ENCODE measurements at regions of chr16 and their contacts with region 1.

Region 1: DNA sequence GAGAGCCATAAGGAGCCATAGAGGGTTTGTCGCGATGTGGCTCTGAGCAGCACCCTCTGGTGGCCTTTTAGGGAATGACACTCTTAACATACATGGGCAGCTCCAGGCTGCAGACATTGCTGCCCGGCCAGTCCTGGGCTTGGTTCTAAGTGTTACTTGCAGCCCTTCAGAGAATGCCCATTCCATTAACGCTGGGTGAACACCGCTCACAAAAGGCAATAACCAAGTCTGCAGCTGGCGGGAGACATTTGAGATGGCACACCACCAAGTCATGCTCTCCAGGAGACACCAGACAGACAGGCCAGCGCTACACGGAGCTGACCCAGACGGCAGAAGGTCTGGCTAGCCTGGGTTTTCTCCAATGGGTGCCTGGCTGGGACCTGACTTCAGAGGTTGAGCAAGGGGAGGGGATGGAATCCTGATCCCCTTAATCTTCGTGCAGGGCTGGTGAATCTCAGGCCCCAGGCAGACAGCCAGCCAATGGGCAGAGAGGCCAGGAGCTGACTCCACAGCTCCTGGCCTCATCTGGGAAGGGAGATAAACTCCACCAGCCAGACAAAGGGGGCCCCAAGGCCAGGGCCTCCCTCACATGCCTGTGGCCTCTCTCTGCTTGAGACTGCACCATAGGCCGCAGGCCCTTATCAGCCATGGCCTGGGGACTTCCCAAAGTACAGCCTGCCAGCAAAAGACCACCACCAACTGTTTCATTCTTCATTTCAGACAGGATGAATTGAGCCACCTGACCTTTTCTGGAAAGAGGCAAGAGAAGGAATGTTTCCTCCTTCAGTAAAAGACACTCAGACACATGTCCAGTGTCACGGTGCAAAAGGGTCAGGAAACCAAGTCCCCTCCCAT is 58.8 kb downstream of the ZDHHC7 start:
- DNase-seq: peak; percentile 80
- ATAC-seq: peak; percentile 89 to 97
- H3K4me3 ChIP-seq: no peak overlapping the region
- H3K27ac ChIP-seq: no peak overlapping the region
- H3K4me1 ChIP-seq: no peaks in the 10 kb centered on the region
- CTCF ChIP-seq: peak; percentile 78
- EP300 ChIP-seq: no peak
- POLR2A ChIP-seq: no peak
- RAD21 ChIP-seq: peak; percentile 68 to 81

Region 2: DNA sequence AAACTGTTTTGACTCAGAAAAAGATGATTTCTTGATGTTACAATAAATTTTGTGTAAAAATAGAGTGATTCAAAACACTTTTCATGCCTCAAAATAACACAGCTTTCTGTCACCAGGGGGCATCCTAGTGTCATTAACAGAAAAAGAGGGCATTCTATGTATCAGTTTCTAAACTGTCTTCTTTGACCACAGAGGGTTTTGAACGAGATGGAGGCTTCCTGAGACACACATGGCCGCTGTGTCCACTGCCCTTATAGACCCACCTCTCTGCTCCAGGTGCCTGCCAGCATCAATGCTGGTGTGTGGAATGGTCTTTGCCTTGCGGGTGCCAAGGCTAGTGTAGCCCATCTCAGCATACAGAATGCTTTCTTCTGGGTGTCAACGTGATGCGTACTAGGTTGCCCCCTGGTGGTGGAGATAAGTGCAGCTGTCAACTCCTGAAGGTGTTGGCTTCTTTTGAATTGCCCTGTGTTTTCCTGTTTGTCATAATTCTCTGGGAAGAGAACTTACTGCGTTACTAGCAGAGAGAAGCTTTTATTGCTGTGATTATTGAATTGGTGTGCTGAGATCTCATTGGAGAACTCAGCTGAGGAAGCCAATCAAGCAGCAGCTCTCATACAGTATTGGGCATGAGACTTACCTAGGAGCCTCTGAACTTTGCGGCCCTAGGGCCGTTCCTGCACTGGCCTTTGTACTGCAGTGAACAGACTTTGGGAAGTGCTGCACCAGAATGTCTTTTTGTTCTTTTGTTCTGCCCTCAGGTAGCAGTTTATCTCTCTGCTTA is 214.1 kb before region 1 on chr16:
- CTCF ChIA-PET with region 1: interaction called, 29 read pairs
- POLR2A ChIA-PET with region 1: no interaction called
- DNase-seq: peak; percentile 84 to 86
- ATAC-seq: peak; percentile 91
- H3K4me3 ChIP-seq: no peak overlapping the region
- H3K27ac ChIP-seq: no peak overlapping the region; a peak in 1 of 6 replicates
- H3K4me1 ChIP-seq: peaks cover 79% of the 10 kb centered on the region
- CTCF ChIP-seq: peak; percentile 95
- EP300 ChIP-seq: no peak
- POLR2A ChIP-seq: no peak
- RAD21 ChIP-seq: peak; percentile 69 to 70

Region 3: DNA sequence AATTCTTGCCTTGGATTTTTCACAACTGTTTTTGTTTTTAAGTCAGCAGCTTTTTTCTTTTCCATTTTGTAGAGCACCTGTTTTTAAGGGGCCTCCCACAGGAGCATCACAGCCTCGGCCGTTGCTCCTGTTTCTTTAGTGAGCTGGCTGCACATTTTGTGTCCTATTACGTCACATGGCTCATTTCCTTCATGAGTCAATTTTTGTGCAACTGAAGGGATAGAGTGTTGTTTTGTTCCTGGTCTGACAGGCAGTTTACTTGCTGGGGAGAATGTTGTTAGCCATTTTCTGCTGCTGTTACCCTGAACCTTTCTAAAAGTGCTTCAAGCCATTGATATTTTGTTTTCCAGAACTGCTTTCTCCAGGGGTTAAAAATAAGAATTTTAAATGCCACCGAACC is 177.8 kb before region 1 on chr16:
- CTCF ChIA-PET with region 1: interaction called, 14 read pairs
- POLR2A ChIA-PET with region 1: no interaction called
- DNase-seq: no peak
- ATAC-seq: no peak
- H3K4me3 ChIP-seq: no peak overlapping the region
- H3K27ac ChIP-seq: no peak overlapping the region
- H3K4me1 ChIP-seq: no peaks in the 10 kb centered on the region
- CTCF ChIP-seq: no peak
- EP300 ChIP-seq: no peak
- POLR2A ChIP-seq: no peak
- RAD21 ChIP-seq: no peak

Region 4: GRCh38 chr16:84806256-84806889 is 146.2 kb before region 1 on chr16:
- CTCF ChIA-PET with region 1: no interaction called
- POLR2A ChIA-PET with region 1: no interaction called
- DNase-seq: peak; percentile 40 to 52
- ATAC-seq: peak; percentile 80 to 83
- H3K4me3 ChIP-seq: 0 out of 3 replicates have a peak overlapping the region, but pooled peaks have one; percentile 8
- H3K27ac ChIP-seq: peak overlapping the region; percentile 44 to 86
- H3K4me1 ChIP-seq: peaks cover 9% of the 10 kb centered on the region; the same call in 1 of the 3 replicates
- CTCF ChIP-seq: no peak
- EP300 ChIP-seq: no peak
- POLR2A ChIP-seq: no peak
- RAD21 ChIP-seq: no peak

Region 5: GRCh38 chr16:84881702-84882521 is 70.7 kb before region 1 on chr16:
- CTCF ChIA-PET with region 1: interaction called, 12 read pairs
- POLR2A ChIA-PET with region 1: no interaction called
- DNase-seq: peak; percentile 61 to 67
- ATAC-seq: peak; percentile 86 to 87
- H3K4me3 ChIP-seq: no peak overlapping the region
- H3K27ac ChIP-seq: peak overlapping the region; percentile 61 to 73; a peak in 5 of 6 replicates
- H3K4me1 ChIP-seq: peaks cover 18% of the 10 kb centered on the region
- CTCF ChIP-seq: no peak
- EP300 ChIP-seq: no peak
- POLR2A ChIP-seq: no peak
- RAD21 ChIP-seq: no peak

Region 6: DNA sequence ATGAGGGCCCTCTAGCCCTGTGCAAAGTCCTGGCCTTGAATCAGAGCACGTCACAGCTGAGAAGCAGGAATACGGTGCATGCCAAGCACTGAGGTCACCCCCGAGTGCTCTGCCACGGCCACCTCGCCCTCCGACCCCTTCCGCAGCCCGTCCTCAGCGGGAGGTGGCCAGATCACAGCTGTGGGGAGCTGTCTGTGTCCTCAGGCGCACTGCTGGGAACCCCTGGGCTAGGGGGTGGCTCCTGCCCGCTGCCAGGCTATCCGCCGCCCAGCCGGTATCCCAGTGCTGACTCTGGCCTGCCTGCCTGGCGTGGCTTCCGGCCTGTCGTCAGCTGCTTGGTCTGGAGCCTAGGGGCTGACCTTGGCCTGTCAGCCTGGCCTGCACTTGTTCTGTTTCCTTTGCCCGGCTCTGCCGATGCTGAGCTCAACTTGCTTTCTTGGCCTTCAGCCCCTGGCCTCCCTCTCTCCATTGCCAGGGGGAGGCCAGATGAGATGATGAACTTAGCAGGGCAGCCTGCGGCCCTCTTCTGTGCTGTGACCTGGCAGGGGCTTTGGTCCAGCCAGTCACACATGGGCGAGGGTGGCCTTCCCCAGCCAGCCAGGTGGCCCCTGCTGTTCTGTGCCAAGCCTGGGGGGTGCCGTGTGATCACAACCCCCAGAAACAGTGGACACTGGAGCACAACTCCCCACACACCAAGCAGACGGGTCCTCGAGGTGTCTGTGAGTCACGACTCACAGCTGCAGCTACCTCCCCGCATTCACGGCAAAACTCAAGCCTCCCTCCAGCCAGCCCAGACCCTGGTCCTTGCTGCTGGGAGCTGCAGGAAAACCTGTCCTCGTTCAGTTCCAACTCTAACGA is 18.6 kb before region 1 on chr16:
- CTCF ChIA-PET with region 1: interaction called, 90 read pairs
- POLR2A ChIA-PET with region 1: interaction called, 4 read pairs
- DNase-seq: no peak
- ATAC-seq: no peak
- H3K4me3 ChIP-seq: no peak overlapping the region
- H3K27ac ChIP-seq: no peak overlapping the region
- H3K4me1 ChIP-seq: peaks cover 1% of the 10 kb centered on the region; the same call in 1 of the 3 replicates
- CTCF ChIP-seq: no peak
- EP300 ChIP-seq: no peak
- POLR2A ChIP-seq: no peak
- RAD21 ChIP-seq: no peak

Region 7: DNA sequence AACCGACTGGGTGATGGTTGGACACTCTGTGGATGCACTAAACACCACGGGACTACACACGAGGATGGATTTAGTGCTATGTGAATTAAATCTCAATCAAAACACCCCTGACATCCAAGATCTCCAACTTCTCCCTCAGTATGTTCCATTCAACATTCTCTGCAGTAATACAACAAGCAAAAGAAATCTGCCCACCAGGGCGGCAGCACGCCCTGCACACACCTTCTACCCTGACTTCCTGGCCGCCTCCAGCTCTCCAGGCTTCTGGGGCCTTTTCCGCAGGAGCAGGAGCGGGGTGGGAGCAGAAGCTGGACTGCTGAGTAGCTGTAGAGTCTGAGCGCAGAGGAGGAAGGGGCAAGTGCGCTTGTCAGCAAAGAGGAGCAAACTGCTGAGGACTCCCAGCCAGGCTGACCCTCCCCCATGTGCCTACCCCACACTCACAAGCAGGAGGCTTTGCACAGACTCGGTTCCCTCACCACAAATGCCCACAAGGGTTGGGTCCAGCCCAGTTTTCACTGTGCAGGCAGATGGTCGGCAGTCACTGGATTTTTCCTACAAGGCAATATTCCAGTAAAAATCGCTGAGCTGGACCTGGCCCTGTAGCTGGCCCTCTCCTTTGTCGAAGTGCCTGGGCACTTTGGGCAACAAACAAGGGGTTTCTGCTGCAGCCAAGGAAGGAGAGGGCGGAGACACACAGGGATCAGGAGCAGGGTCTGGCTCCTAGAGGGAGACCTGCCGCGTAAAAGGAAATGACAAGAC is 35.9 kb after region 1 on chr16:
- CTCF ChIA-PET with region 1: interaction called, 11 read pairs
- POLR2A ChIA-PET with region 1: no interaction called
- DNase-seq: no peak
- ATAC-seq: peak; percentile 25 to 51; a peak in 3 of 6 replicates
- H3K4me3 ChIP-seq: no peak overlapping the region
- H3K27ac ChIP-seq: peak overlapping the region in 1 of 2 experiments; percentile 29; a peak in 2 of 6 replicates
- H3K4me1 ChIP-seq: peaks cover 29% of the 10 kb centered on the region
- CTCF ChIP-seq: no peak
- EP300 ChIP-seq: no peak
- POLR2A ChIP-seq: no peak
- RAD21 ChIP-seq: no peak

Measured in A549 (cell line).